ENCODE measurements at regions of chr22 and their contacts with region 1.

Region 1: GRCh38 chr22:26672590-26673468 is 15.4 kb downstream of the MIAT start:
- DNase-seq: peak; percentile 77 to 97 (median 91)
- ATAC-seq: peak; percentile 67
- H3K4me3 ChIP-seq: peak overlapping the region; percentile 79
- H3K4me3 Mint-ChIP-seq: peak overlapping the region; percentile 97
- H3K27ac ChIP-seq: peak overlapping the region; percentile 88 to 90
- H3K27ac Mint-ChIP-seq: peak overlapping the region; percentile 95
- H3K4me1 ChIP-seq: peaks cover 93% of the 10 kb centered on the region
- H3K4me1 Mint-ChIP-seq: peaks cover 84% of the 10 kb centered on the region
- H3K27me3 ChIP-seq: no peaks in the 10 kb centered on the region
- H3K27me3 Mint-ChIP-seq: no peaks in the 10 kb centered on the region
- CTCF ChIP-seq: peak; percentile 23

Region 2: DNA sequence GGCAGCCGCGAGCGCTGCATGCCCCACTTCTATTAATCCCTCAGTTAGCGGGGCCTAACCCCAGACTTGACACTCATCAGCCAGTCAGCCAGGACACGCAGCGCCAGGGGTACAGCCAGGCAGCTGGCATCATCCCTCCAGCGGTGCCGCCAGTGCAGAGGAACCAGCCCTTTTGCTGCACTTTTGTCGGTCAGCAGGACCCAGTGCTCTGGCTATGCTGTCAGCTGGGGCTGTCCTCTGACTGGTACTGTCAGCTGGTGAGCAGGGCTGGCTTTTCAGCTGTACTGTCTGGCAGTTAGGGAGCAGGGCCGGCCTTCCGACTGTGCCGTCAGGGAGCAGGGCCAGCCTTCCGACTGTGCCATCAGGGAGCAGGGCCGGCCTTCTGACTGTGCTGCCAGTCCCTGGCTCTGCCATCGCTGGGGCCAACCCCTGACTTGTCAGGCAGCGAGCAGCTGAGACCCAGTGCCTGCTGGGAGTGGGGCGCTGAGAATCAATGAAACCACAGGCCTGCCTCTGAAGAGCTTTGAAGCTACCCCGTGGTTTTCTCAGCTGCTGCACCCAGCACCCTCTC is 1604.9 kb before region 1 on chr22:
- CTCF ChIA-PET with region 1: no interaction called
- POLR2A ChIA-PET with region 1: no interaction called
- intact Hi-C with region 1: loop called in 1 of 2 experiments (anchors 10 kb)
- DNase-seq: peak; percentile 75 to 97 (median 86)
- ATAC-seq: peak; percentile 83
- H3K4me3 ChIP-seq: peak overlapping the region; percentile 29
- H3K4me3 Mint-ChIP-seq: peak overlapping the region; percentile 73
- H3K27ac ChIP-seq: peak overlapping the region; percentile 83 to 90
- H3K27ac Mint-ChIP-seq: peak overlapping the region; percentile 96
- H3K4me1 ChIP-seq: peaks cover 93% of the 10 kb centered on the region
- H3K4me1 Mint-ChIP-seq: peaks cover 81% of the 10 kb centered on the region
- H3K27me3 ChIP-seq: no peaks in the 10 kb centered on the region
- H3K27me3 Mint-ChIP-seq: no peaks in the 10 kb centered on the region
- CTCF ChIP-seq: no peak

Region 3: GRCh38 chr22:26428515-26429457 is 244.0 kb before region 1 on chr22 and contains the start of gene ASPHD2:
- CTCF ChIA-PET with region 1: no interaction called
- POLR2A ChIA-PET with region 1: interaction called, 4 read pairs
- intact Hi-C with region 1: loop called in 1 of 2 experiments (anchors 2 kb)
- DNase-seq: peak; percentile 61 to 92 (median 77)
- ATAC-seq: peak; percentile 85
- H3K4me3 ChIP-seq: peak within 1 kb of the TSS; percentile 87
- H3K4me3 Mint-ChIP-seq: peak within 1 kb of the TSS; percentile 98
- H3K27ac ChIP-seq: peak within 1 kb of the TSS; percentile 96 to 97
- H3K27ac Mint-ChIP-seq: peak within 1 kb of the TSS; percentile 94
- H3K4me1 ChIP-seq: peaks cover 30% of the 10 kb centered on the region
- H3K4me1 Mint-ChIP-seq: peaks cover 31% of the 10 kb centered on the region
- H3K27me3 ChIP-seq: no peaks in the 10 kb centered on the region
- H3K27me3 Mint-ChIP-seq: no peaks in the 10 kb centered on the region
- CTCF ChIP-seq: no peak
- total RNA-seq, gene ASPHD2: 0.70 to 0.85 TPM

Region 4: GRCh38 chr22:26511857-26512793 is 160.7 kb before region 1 on chr22 and contains the start of gene TFIP11:
- CTCF ChIA-PET with region 1: no interaction called
- POLR2A ChIA-PET with region 1: interaction called, 12 read pairs
- intact Hi-C with region 1: loop called in 1 of 2 experiments (anchors 2 kb)
- DNase-seq: peak; percentile 80 to 94 (median 88)
- ATAC-seq: peak; percentile 89
- H3K4me3 ChIP-seq: peak within 1 kb of the TSS; percentile 99
- H3K4me3 Mint-ChIP-seq: peak within 1 kb of the TSS; percentile 98
- H3K27ac ChIP-seq: peak within 1 kb of the TSS; percentile 71 to 91
- H3K27ac Mint-ChIP-seq: peak within 1 kb of the TSS; percentile 95
- H3K4me1 ChIP-seq: peaks cover 22% of the 10 kb centered on the region
- H3K4me1 Mint-ChIP-seq: peaks cover 46% of the 10 kb centered on the region
- H3K27me3 ChIP-seq: no peaks in the 10 kb centered on the region
- H3K27me3 Mint-ChIP-seq: no peaks in the 10 kb centered on the region
- CTCF ChIP-seq: no peak
- total RNA-seq, gene TFIP11: 111 TPM

Region 5: GRCh38 chr22:26589845-26590736 is 82.7 kb before region 1 on chr22 and contains the start of gene TPST2:
- CTCF ChIA-PET with region 1: no interaction called
- POLR2A ChIA-PET with region 1: interaction called, 10 read pairs
- intact Hi-C with region 1: loop called in 1 of 2 experiments (anchors 5 kb)
- DNase-seq: peak; percentile 58 to 93 (median 74)
- ATAC-seq: peak; percentile 83
- H3K4me3 ChIP-seq: peak within 1 kb of the TSS; percentile 79
- H3K4me3 Mint-ChIP-seq: peak within 1 kb of the TSS; percentile 93
- H3K27ac ChIP-seq: peak within 1 kb of the TSS; percentile 37 to 59
- H3K27ac Mint-ChIP-seq: peak within 1 kb of the TSS; percentile 89
- H3K4me1 ChIP-seq: peaks cover 73% of the 10 kb centered on the region
- H3K4me1 Mint-ChIP-seq: peaks cover 66% of the 10 kb centered on the region
- H3K27me3 ChIP-seq: no peaks in the 10 kb centered on the region
- H3K27me3 Mint-ChIP-seq: no peaks in the 10 kb centered on the region
- CTCF ChIP-seq: no peak
- total RNA-seq, gene TPST2: 7.2 to 7.4 TPM

Region 6: DNA sequence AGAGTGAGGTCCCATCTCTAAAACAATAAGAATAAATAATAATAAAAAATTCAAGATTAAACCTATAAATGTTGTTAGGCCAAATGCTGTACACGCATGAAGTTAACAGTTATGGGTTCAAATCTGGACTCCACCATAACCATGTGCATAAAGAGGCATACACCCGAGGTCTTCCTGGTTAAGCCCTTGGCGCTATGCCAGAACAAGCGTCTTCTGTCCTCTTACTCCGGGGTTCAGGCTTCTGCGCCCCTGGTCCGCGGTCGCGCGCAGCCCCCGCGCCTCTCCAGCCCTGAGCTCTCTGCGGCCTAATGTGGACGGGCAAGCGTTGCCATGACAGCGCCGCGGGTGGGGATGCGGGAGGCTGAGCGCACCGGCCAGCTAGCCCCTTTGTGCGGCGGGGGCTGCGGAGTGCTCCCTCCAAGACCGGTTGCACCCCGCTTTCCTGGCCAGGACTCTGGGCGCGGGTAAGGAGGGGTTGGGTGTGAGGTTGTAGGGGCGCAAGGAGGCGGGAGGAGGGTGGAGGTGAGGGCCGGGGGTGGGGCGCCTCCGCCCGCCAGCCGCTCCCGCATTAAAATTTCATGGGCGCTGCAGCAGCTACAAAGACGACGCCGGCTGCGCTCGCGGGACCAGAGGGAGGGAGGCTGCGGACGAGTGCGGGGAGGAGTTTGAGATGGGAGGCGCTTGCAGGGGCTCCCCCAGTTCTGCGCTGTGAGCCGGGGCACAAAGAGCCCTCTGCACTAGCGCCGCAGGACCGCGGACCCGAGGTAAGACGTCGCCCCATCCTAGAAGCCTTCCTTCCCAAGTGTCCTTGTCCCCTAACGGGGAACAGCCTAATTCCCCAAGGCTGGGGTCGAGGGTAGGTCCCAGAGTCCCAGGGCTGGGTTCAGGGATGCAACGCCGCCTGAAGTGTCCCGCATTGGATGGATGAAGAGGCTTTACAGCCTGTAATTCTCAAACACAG is 15.7 kb before region 1 on chr22 and contains the start of gene MIAT:
- CTCF ChIA-PET with region 1: interaction called, 6 read pairs
- POLR2A ChIA-PET with region 1: interaction called, 11 read pairs
- intact Hi-C with region 1: no loop called
- DNase-seq: peak; percentile 49 to 85 (median 64)
- ATAC-seq: peak; percentile 80
- H3K4me3 ChIP-seq: peak within 1 kb of the TSS; percentile 89
- H3K4me3 Mint-ChIP-seq: peak within 1 kb of the TSS; percentile 90
- H3K27ac ChIP-seq: no peak within 1 kb of the TSS
- H3K27ac Mint-ChIP-seq: peak within 1 kb of the TSS; percentile 77
- H3K4me1 ChIP-seq: peaks cover 30% of the 10 kb centered on the region
- H3K4me1 Mint-ChIP-seq: peaks cover 21% of the 10 kb centered on the region
- H3K27me3 ChIP-seq: peaks cover 0 to 4% of the 10 kb centered on the region in 2 experiments
- H3K27me3 Mint-ChIP-seq: peaks cover 37% of the 10 kb centered on the region
- CTCF ChIP-seq: no peak
- total RNA-seq, gene MIAT: 26.8 to 27.2 TPM

Region 7: DNA sequence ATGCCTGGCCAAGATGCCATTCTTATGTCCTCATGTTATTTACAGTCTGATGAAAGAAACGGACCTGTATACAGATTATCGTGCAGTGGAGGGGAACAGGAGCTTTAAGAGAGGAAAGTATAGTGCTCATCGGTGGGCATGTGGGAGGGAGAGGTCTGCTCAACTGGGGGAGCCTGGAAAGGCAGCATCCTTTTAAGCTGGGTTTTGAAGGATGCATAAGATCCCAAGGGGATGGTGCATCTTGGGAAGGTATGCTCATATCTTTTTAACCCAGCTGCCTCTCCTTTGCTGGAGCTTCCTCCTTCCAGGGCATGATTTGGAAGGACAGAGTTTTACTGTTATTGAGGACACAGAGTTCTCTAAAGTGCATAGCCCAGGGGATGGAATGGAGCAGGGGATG is 19.4 kb after region 1 on chr22:
- CTCF ChIA-PET with region 1: no interaction called
- POLR2A ChIA-PET with region 1: no interaction called
- intact Hi-C with region 1: no loop called
- DNase-seq: no peak
- ATAC-seq: no peak
- H3K4me3 ChIP-seq: no peak overlapping the region
- H3K4me3 Mint-ChIP-seq: no peak overlapping the region
- H3K27ac ChIP-seq: no peak overlapping the region
- H3K27ac Mint-ChIP-seq: no peak overlapping the region
- H3K4me1 ChIP-seq: peaks cover 28% of the 10 kb centered on the region
- H3K4me1 Mint-ChIP-seq: peaks cover 84% of the 10 kb centered on the region
- H3K27me3 ChIP-seq: no peaks in the 10 kb centered on the region
- H3K27me3 Mint-ChIP-seq: no peaks in the 10 kb centered on the region
- CTCF ChIP-seq: no peak

Region 8: DNA sequence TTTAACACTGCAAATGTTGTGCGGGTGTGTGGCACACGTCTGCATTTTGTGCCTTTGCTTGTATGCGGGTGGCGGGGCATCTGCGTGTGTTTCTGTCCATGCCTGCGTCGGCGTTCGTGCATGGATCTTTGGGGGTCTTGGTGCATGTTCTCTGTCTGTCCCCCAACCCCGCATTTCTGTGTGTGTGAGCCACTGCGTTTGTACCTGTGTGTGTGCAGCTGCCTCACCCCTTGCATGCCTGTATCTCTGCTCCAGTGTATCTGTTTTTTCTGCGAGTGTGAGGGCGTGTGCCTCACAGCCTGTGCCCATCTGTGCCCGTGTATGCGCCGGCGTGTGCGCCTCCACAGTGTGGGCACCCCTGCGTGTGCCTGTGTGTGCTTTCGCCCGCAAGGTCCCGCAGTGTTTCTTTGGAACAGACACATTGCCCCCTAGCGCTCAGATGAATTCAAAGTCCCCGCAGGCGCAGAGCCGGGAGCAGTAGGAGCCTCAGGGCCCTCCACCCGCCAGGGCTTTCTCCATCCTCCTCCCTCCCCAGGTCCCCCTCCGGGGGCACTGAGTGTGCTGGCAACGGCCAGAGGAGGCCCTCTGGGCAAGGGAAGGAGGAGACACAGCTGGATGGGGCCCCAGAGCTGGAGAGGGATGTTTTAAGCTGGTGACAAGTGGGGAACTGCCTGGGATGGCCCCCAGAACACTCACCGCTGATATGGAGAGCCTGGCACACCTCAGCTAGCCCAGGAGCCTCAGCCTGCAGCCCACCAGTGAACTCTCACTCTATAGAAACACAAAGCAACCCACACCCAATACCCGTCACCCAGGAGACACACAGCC is 1131.9 kb after region 1 on chr22:
- CTCF ChIA-PET with region 1: no interaction called
- POLR2A ChIA-PET with region 1: no interaction called
- intact Hi-C with region 1: loop called in 1 of 2 experiments (anchors 2 kb)
- DNase-seq: peak in 13 of 14 experiments; percentile 27 to 72 (median 44)
- ATAC-seq: peak; percentile 32
- H3K4me3 ChIP-seq: no peak overlapping the region
- H3K4me3 Mint-ChIP-seq: peak overlapping the region; percentile 91
- H3K27ac ChIP-seq: no peak overlapping the region
- H3K27ac Mint-ChIP-seq: no peak overlapping the region
- H3K4me1 ChIP-seq: peaks cover 24% of the 10 kb centered on the region
- H3K4me1 Mint-ChIP-seq: peaks cover 19% of the 10 kb centered on the region
- H3K27me3 ChIP-seq: peaks cover 7% of the 10 kb centered on the region in 2 experiments
- H3K27me3 Mint-ChIP-seq: peaks cover 34% of the 10 kb centered on the region
- CTCF ChIP-seq: peak; percentile 68